ENCODE measurements at regions of chr12 and their contacts with region 1.

Region 1: DNA sequence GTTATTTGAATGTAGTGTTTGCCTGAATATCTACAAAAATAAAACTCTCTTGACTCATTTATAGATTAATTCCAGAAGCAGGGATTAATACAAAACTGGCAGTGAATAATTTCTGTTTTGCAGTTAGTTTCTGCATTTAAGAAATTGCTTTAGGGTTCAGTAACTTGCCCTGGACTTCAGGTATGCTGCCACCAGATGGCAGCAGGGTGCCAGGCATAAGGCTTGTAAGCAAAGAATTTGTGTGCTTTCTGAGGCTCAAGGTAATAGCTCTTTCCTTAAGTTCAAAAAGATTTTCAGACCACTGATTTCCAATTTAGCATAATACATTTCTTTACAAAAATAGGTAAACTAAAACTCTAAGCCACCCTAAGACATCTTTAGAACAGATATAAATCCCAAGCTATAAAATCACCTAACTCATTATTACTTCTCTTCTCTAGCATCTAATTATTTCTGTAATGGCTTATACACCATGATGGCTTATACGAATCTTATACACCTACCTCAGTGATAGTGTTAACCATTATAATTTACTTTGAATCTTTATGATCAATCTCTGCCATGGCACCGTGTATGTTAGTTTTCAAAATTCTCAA is 398.3 kb downstream of the APAF1 start:
- H3K4me3 Mint-ChIP-seq: no peak overlapping the region
- H3K27ac Mint-ChIP-seq: no peak overlapping the region
- H3K4me1 Mint-ChIP-seq: no peaks in the 10 kb centered on the region
- H3K27me3 Mint-ChIP-seq: peaks cover 4% of the 10 kb centered on the region

Region 2: GRCh38 chr12:99170037-99170436 is 126.6 kb after region 1 on chr12:
- intact Hi-C with region 1: loop called (anchors 1 kb)
- H3K4me3 Mint-ChIP-seq: no peak overlapping the region
- H3K27ac Mint-ChIP-seq: no peak overlapping the region
- H3K4me1 Mint-ChIP-seq: no peaks in the 10 kb centered on the region
- H3K27me3 Mint-ChIP-seq: no peaks in the 10 kb centered on the region

Region 3: DNA sequence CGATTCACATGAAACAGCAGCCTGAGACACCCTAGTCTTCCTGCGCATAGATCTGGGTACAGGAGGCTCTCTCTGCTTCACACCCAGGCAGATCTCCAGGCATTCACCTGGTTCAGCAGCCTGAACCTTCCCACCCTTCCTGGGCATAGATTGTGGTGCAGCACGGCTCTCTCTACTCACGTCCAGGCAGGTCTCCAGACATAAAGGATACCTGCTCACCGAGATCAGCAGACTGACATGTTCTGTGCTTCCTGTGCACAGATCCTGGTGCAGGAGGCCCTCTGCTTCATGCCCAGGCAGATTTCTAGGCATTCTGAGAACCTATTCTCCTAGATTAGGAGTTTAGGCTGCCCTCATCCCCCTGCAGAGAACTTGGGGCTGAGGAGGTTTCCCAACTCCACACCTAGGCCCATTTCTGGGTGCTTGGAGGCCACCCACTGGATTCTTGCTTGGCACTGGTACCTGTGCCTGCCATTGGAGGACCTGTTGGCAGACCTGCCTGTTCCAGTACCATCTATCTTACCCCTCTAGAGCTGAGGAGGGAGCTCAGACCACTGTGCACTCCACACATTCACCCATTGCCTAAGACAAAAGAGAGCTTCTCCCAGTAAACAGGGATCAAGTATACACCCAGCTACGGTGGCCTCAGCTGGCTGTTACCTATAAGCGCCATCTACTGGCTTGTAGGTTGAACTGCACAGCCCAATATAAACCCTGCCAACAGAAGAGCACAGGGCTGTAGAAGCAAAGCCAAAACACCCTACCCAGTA is 576.2 kb after region 1 on chr12:
- intact Hi-C with region 1: loop called (anchors 1 kb)
- H3K4me3 Mint-ChIP-seq: no peak overlapping the region
- H3K27ac Mint-ChIP-seq: no peak overlapping the region
- H3K4me1 Mint-ChIP-seq: no peaks in the 10 kb centered on the region
- H3K27me3 Mint-ChIP-seq: no peaks in the 10 kb centered on the region

Region 4: GRCh38 chr12:99767809-99768208 is 724.4 kb after region 1 on chr12:
- intact Hi-C with region 1: loop called (anchors 2 kb)
- H3K4me3 Mint-ChIP-seq: no peak overlapping the region
- H3K27ac Mint-ChIP-seq: no peak overlapping the region
- H3K4me1 Mint-ChIP-seq: no peaks in the 10 kb centered on the region
- H3K27me3 Mint-ChIP-seq: no peaks in the 10 kb centered on the region